H1 (cell line): ENCODE measurements at regions of chr20 and their contacts with region 1.

Region 1: DNA sequence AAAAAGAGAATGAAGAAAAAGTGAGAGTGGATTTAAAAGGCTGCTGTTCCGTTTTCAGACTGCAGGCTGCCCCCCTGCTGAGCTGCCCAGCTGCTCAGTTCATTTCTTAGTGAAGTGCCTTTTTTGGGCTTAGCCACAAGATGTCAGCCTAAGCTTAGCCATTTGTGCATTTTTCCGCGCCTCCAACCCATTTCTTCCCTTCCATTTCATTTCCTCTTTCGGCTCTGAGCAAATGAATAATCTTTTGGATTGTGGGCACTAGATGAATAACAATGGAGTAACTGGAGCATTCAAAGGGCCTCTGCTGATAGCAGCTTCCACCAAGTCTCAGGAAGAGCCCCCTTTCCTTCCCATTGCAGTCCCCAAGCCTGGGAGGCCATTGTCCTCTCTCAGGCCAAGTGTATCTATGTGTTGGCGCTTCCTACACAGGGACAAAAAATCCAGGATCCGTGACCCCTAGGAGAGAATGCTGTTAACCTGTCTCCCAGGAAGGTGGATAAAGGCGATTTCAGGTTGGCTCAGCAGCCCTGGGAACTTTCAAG is 83.5 kb upstream of the SPTLC3 start:
- DNase-seq: peak in 1 of 2 experiments; percentile 67
- H3K4me3 ChIP-seq: no peak overlapping the region
- H3K27ac ChIP-seq: no peak overlapping the region
- H3K4me1 ChIP-seq: peaks cover 2 to 8% (median 5%) of the 10 kb centered on the region in 4 experiments; a peak in 4 of 7 replicates
- H3K27me3 ChIP-seq: peaks cover 0 to 2% (median 0%) of the 10 kb centered on the region in 4 experiments; a peak in 2 of 7 replicates
- CTCF ChIP-seq: peak; percentile 50 to 96 (median 79)
- EP300 ChIP-seq: no peak
- POLR2A ChIP-seq: no peak
- RAD21 ChIP-seq: peak; percentile 92 to 94

Region 2: DNA sequence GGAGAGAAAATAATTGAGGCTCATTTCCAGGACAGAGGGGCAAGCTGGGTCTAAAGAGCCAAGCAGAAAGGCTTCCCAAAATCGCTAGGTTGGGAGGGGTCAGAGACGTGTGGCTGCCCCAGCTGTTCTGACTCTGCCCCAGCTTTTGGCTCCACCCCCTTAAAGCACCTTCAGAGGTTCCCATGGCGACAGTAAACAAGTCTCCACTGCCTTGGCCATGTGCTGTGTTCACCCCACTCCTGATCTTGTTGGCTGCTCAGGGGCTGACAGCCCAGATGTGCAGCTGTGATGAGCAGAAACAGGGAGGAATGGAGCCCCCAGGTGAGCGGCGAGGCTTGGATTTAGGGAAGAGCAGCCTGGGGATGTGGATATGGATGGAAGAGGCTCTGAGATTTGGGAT is 10.8 kb after region 1 on chr20:
- CTCF ChIA-PET with region 1: interaction called, 24 read pairs
- POLR2A ChIA-PET with region 1: no interaction called
- DNase-seq: no peak
- H3K4me3 ChIP-seq: no peak overlapping the region
- H3K27ac ChIP-seq: no peak overlapping the region
- H3K4me1 ChIP-seq: no peaks in the 10 kb centered on the region
- H3K27me3 ChIP-seq: no peaks in the 10 kb centered on the region
- CTCF ChIP-seq: no peak
- EP300 ChIP-seq: no peak
- POLR2A ChIP-seq: no peak
- RAD21 ChIP-seq: no peak

Region 3: GRCh38 chr20:12970372-12970821 is 45.1 kb after region 1 on chr20:
- CTCF ChIA-PET with region 1: interaction called, 64 read pairs
- POLR2A ChIA-PET with region 1: no interaction called
- DNase-seq: no peak
- H3K4me3 ChIP-seq: no peak overlapping the region
- H3K27ac ChIP-seq: no peak overlapping the region
- H3K4me1 ChIP-seq: peaks cover 0 to 5% (median 0%) of the 10 kb centered on the region in 4 experiments; a peak in 1 of 7 replicates
- H3K27me3 ChIP-seq: no peaks in the 10 kb centered on the region
- CTCF ChIP-seq: peak in 2 of 3 experiments; percentile 51 to 60; a peak in 3 of 4 replicates
- EP300 ChIP-seq: no peak
- POLR2A ChIP-seq: no peak
- RAD21 ChIP-seq: peak; percentile 85

Region 4: GRCh38 chr20:13105864-13106457 is 180.7 kb after region 1 on chr20:
- CTCF ChIA-PET with region 1: interaction called, 27 read pairs
- POLR2A ChIA-PET with region 1: no interaction called
- DNase-seq: no peak
- H3K4me3 ChIP-seq: no peak overlapping the region
- H3K27ac ChIP-seq: no peak overlapping the region
- H3K4me1 ChIP-seq: no peaks in the 10 kb centered on the region; a peak in 4 of 7 replicates
- H3K27me3 ChIP-seq: no peaks in the 10 kb centered on the region
- CTCF ChIP-seq: peak in 2 of 3 experiments; percentile 32 to 47; a peak in 2 of 4 replicates
- EP300 ChIP-seq: no peak
- POLR2A ChIP-seq: no peak
- RAD21 ChIP-seq: peak; percentile 71 to 76

Region 5: DNA sequence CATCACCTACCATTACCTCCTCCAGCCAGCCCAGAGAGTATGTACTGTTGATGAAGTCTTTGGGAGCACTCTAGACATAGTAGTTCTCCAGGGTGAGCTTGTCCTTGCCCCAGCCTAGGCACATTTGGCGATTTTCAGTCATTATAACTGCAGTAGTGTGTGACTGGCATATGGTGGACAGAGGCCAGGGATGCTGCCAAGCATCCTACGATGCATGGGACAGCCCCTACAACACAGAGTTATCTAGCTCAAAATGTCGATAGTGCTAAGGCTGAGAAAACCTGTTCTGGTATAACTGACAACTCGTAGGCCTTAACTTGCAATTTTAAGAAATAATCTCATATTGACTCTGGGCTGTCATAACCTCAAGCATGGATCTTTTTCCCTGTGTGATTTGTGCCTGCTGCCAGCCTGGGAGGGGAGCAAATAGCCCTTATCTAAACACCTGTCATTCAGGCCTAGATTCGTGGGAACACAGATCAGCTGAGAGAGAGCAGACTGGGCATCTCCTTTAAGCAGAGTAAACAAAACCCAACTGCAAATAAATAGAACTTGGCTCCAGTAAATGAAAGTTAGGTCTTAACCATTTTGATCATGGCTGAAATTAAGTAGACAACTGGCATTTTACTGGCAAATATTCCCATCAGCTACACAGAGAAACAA is 186.1 kb after region 1 on chr20:
- CTCF ChIA-PET with region 1: interaction called, 16 read pairs
- POLR2A ChIA-PET with region 1: no interaction called
- DNase-seq: no peak
- H3K4me3 ChIP-seq: no peak overlapping the region
- H3K27ac ChIP-seq: no peak overlapping the region
- H3K4me1 ChIP-seq: no peaks in the 10 kb centered on the region
- H3K27me3 ChIP-seq: no peaks in the 10 kb centered on the region
- CTCF ChIP-seq: no peak
- EP300 ChIP-seq: no peak
- POLR2A ChIP-seq: no peak
- RAD21 ChIP-seq: no peak